Common myeloid progenitor, CD34-positive (primary cell): ENCODE measurements at regions of chr11 and their contacts with region 1.

Region 1: DNA sequence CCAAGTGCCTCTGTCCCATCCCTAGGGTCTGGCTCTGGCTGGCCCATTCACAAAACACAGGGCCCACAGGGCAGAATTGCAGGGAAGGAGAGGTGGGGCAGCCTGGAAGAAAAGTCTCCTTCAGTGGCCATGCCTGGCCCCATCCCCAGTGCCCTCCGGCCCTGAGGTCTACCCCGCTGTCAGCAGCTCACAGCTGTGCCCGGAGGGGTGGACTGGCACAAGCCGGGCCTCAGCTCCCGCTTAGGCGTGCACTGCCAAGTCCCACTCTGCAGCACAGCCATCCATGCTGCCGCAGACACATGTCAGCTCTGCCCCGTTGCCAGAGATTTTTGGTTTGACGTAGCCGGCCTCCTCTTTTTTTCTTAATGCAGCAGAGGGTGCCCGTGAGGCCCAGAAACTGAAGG is 3.9 kb upstream of the SCN2B start:
- DNase-seq: peak; percentile 70 to 82 (median 80)
- H3K4me3 ChIP-seq: peak overlapping the region in 2 of 7 experiments; percentile 32 to 42
- H3K27ac ChIP-seq: no peak overlapping the region
- H3K4me1 ChIP-seq: peaks cover 0 to 22% (median 9%) of the 10 kb centered on the region in 4 experiments
- H3K27me3 ChIP-seq: no peaks in the 10 kb centered on the region

Region 2: GRCh38 chr11:118156531-118157185 is 23.6 kb before region 1 on chr11:
- CTCF ChIA-PET with region 1: interaction called, 11 read pairs
- POLR2A ChIA-PET with region 1: no interaction called
- DNase-seq: peak; percentile 46 to 70 (median 68)
- H3K4me3 ChIP-seq: peak overlapping the region in 1 of 7 experiments; percentile 28
- H3K27ac ChIP-seq: no peak overlapping the region
- H3K4me1 ChIP-seq: peaks cover 0 to 24% (median 16%) of the 10 kb centered on the region in 4 experiments
- H3K27me3 ChIP-seq: peaks cover 0 to 68% (median 36%) of the 10 kb centered on the region in 5 experiments

Region 3: GRCh38 chr11:118216621-118217481 is 36.5 kb after region 1 on chr11:
- CTCF ChIA-PET with region 1: no interaction called
- POLR2A ChIA-PET with region 1: no interaction called
- DNase-seq: peak in 2 of 3 donors; percentile 54 to 64
- H3K4me3 ChIP-seq: peak overlapping the region in 3 of 7 experiments; percentile 10 to 35 (median 26)
- H3K27ac ChIP-seq: no peak overlapping the region
- H3K4me1 ChIP-seq: peaks cover 41 to 88% (median 80%) of the 10 kb centered on the region in 4 experiments
- H3K27me3 ChIP-seq: no peaks in the 10 kb centered on the region

Region 4: DNA sequence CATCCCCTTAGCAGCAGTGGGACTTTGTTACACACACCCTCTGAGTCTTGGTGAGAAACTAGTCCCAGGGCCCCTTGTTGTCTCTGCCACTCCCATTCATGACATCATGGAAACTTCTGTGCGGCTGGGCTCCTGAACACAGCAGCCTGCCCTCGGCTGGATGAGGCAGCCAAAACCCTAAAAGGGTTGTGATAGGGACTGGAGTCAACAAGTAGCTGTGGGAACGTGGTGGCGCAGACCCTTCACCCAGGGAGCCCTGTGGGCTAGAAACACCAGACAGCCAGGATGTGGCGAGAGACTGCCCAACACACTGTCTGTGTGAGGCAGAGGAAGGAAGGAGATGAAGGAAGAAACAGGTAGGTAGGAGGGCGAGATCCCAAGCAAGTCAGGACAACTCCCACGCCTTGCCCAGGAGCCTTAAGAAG is 158.3 kb after region 1 on chr11:
- CTCF ChIA-PET with region 1: no interaction called
- POLR2A ChIA-PET with region 1: no interaction called
- DNase-seq: peak in 2 of 3 donors; percentile 37 to 56
- H3K4me3 ChIP-seq: no peak overlapping the region
- H3K27ac ChIP-seq: no peak overlapping the region
- H3K4me1 ChIP-seq: peaks cover 0 to 10% (median 2%) of the 10 kb centered on the region in 4 experiments
- H3K27me3 ChIP-seq: no peaks in the 10 kb centered on the region